B cell (primary cell): ENCODE measurements at regions of chr10 and their contacts with region 1.

Region 1: DNA sequence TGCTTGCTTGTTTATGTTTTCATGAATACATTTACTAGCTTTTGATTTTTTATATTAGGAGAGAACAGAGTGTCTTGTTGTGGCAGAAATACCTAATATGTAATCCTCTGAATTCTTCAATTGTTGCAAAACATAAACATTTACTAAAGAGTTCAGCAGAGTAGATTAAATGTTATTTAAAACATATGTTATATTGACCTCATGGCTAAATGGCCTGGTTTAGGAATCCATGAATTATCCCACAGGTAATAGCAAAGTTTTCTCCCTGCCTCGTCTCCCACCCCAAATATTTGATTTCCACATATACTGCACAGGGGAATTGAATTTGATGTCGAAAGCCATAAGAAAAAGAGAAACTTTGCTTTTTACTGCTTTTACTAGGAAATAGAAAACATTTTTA is 111.8 kb downstream of the ADK start:
- DNase-seq: no peak
- ATAC-seq: no peak
- H3K4me3 ChIP-seq: no peak overlapping the region
- H3K4me3 Mint-ChIP-seq: no peak overlapping the region
- H3K27ac ChIP-seq: no peak overlapping the region
- H3K27ac Mint-ChIP-seq: peak overlapping the region; percentile 4
- H3K4me1 ChIP-seq: peaks cover 0 to 9% of the 10 kb centered on the region in 2 donors
- H3K4me1 Mint-ChIP-seq: peaks cover 20% of the 10 kb centered on the region
- H3K27me3 ChIP-seq: no peaks in the 10 kb centered on the region
- H3K27me3 Mint-ChIP-seq: no peaks in the 10 kb centered on the region
- CTCF ChIP-seq: no peak

Region 2: GRCh38 chr10:74249865-74250264 is 13.0 kb before region 1 on chr10:
- CTCF ChIA-PET with region 1: interaction called, 8 read pairs
- POLR2A ChIA-PET with region 1: no interaction called
- intact Hi-C with region 1: loop called (anchors 2 kb)
- DNase-seq: no peak
- ATAC-seq: no peak
- H3K4me3 ChIP-seq: no peak overlapping the region
- H3K4me3 Mint-ChIP-seq: no peak overlapping the region
- H3K27ac ChIP-seq: no peak overlapping the region
- H3K27ac Mint-ChIP-seq: no peak overlapping the region
- H3K4me1 ChIP-seq: peaks cover 0 to under 1% of the 10 kb centered on the region in 2 donors
- H3K4me1 Mint-ChIP-seq: peaks cover 16% of the 10 kb centered on the region
- H3K27me3 ChIP-seq: no peaks in the 10 kb centered on the region
- H3K27me3 Mint-ChIP-seq: no peaks in the 10 kb centered on the region
- CTCF ChIP-seq: no peak